Caco-2 (cell line): ENCODE measurements at regions of chr17 and their contacts with region 1.

Region 1: GRCh38 chr17:68821860-68822696 is 133.1 kb downstream of the ABCA8 start:
- DNase-seq: peak; percentile 9 to 39
- H3K4me3 ChIP-seq: no peak overlapping the region
- H3K4me3 Mint-ChIP-seq: peak overlapping the region; percentile 29
- H3K27ac Mint-ChIP-seq: peak overlapping the region; percentile 76
- H3K4me1 ChIP-seq: peaks cover 30% of the 10 kb centered on the region
- H3K4me1 Mint-ChIP-seq: peaks cover 26% of the 10 kb centered on the region
- H3K27me3 ChIP-seq: no peaks in the 10 kb centered on the region
- H3K27me3 Mint-ChIP-seq: no peaks in the 10 kb centered on the region
- CTCF ChIP-seq: no peak

Region 2: DNA sequence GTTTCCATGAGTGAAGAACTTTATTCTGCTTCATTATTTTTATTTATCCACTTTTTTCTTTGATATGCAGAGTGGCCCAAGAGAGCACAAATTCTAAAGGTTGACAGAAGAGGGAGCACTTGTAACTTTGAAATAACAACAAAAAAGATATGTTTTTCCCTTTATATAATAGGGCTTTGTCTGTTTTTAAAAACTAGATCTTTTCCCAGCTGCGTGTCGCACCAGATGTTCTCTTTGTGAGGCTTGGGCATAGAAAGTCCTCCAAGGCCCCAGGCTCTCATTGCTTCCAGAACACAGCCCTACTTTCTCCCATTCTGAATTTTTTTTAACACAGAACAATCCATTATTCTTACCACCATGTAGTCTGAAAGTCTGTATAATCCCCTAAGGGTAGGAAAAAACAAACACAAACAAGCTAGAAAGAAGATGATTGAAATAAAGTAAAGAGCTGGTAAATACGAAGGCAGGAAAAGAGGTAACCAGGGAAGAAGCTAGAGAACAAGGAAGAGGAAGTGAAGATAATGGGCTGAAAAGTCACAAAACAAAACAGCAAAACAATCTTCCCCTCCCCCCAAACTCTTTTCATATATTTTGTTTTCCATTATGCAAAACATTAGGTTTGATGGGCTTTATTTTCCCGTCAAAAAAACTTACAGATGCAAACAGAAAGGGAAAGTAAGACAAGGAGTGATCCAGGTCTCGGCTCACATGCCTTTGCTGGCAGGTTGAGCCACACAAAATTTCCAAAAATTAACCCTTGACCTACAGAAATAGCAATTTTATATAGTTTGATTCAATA is 27.2 kb before region 1 on chr17:
- CTCF ChIA-PET with region 1: no interaction called
- POLR2A ChIA-PET with region 1: interaction called, 3 read pairs
- intact Hi-C with region 1: loop called (anchors 1 kb)
- DNase-seq: no peak
- H3K4me3 ChIP-seq: no peak overlapping the region
- H3K4me3 Mint-ChIP-seq: no peak overlapping the region
- H3K27ac Mint-ChIP-seq: no peak overlapping the region
- H3K4me1 ChIP-seq: peaks cover 17% of the 10 kb centered on the region
- H3K4me1 Mint-ChIP-seq: peaks cover 9% of the 10 kb centered on the region
- H3K27me3 ChIP-seq: no peaks in the 10 kb centered on the region
- H3K27me3 Mint-ChIP-seq: no peaks in the 10 kb centered on the region
- CTCF ChIP-seq: no peak

Region 3: DNA sequence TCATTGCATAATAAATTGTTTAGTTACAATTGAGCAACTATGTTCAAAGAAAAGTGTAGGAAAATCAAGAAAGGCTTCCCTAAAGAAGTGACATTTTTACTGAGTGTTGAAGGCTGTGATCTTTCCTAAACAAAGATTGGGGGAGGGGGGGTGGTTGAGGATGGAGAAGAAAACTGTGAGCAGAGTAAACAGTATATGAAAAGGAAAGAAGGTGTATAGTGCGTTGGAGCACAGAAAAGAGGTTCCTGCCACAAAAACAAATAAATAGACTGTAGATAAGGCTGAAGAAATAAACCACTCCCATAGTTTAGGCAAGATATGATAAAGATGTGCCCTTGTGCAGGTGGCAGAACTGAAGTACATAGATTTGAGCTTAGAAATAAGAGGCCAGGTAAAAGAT is 398.0 kb after region 1 on chr17:
- CTCF ChIA-PET with region 1: no interaction called
- POLR2A ChIA-PET with region 1: no interaction called
- intact Hi-C with region 1: loop called (anchors 1 kb)
- DNase-seq: peak in 1 of 2 experiments; percentile 58
- H3K4me3 ChIP-seq: no peak overlapping the region
- H3K4me3 Mint-ChIP-seq: no peak overlapping the region
- H3K27ac Mint-ChIP-seq: no peak overlapping the region
- H3K4me1 ChIP-seq: no peaks in the 10 kb centered on the region
- H3K4me1 Mint-ChIP-seq: peaks cover 16% of the 10 kb centered on the region
- H3K27me3 ChIP-seq: no peaks in the 10 kb centered on the region
- H3K27me3 Mint-ChIP-seq: no peaks in the 10 kb centered on the region
- CTCF ChIP-seq: no peak